PC-3 (cell line): ENCODE measurements at regions of chr2 and their contacts with region 1.

Region 1: GRCh38 chr2:54471221-54471711 is 15.1 kb downstream of the SPTBN1 start:
- DNase-seq: peak; percentile 43
- ATAC-seq: no peak
- H3K4me3 ChIP-seq: no peak overlapping the region
- H3K27ac ChIP-seq: no peak overlapping the region
- H3K4me1 ChIP-seq: no peaks in the 10 kb centered on the region
- H3K27me3 ChIP-seq: no peaks in the 10 kb centered on the region
- CTCF ChIP-seq: no peak

Region 2: DNA sequence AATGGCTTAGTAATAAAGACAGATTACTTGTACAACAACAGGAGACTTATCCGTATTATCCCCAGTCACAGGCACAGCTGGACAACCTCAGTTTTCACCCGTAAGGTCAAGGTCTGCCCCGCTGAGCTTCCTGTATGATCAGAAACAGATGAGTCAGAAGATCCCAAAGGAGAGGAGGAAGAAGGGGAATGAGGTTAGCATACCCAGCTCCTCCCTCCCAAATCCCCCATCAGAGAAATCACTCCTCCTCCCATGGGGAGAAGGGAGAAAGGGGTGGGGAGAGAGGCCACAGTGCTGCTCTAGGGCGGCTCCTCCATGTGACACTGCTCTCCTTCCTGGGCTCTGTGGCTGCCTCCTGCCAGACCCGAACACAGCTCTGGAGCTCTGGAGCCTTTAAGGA is 68.9 kb before region 1 on chr2:
- CTCF ChIA-PET with region 1: no interaction called
- POLR2A ChIA-PET with region 1: no interaction called
- intact Hi-C with region 1: no loop called
- DNase-seq: no peak
- ATAC-seq: no peak
- H3K4me3 ChIP-seq: no peak overlapping the region
- H3K27ac ChIP-seq: no peak overlapping the region
- H3K4me1 ChIP-seq: no peaks in the 10 kb centered on the region
- H3K27me3 ChIP-seq: 0 out of 2 replicates have a peak, but pooled peaks cover 4% of the 10 kb centered on the region
- CTCF ChIP-seq: no peak

Region 3: DNA sequence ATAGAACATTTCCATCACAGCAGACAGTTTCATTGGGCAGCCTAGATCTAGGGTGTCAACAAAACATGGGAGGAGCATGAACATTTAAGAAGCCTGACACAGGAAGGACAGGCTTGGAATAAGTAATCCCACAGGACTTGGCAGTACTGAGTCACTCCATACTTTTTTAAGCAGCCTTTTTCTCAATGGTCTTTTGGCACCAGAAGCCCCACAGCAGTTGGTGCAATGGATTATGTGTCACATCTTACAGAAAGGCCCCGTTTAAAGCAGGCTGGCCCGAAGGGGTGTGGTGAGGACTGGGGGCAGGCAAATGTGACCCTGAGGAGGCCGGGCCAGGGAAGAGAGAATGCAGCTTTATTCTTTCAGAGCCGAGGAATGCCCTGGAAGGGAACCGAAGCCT is 11.4 kb after region 1 on chr2:
- CTCF ChIA-PET with region 1: no interaction called
- POLR2A ChIA-PET with region 1: no interaction called
- intact Hi-C with region 1: no loop called
- DNase-seq: peak; percentile 28
- ATAC-seq: peak; percentile 18; the same call in 1 of the 2 replicates
- H3K4me3 ChIP-seq: no peak overlapping the region
- H3K27ac ChIP-seq: no peak overlapping the region
- H3K4me1 ChIP-seq: peaks cover 10% of the 10 kb centered on the region
- H3K27me3 ChIP-seq: no peaks in the 10 kb centered on the region
- CTCF ChIP-seq: no peak

Region 4: GRCh38 chr2:54531558-54531957 is 60.3 kb after region 1 on chr2:
- CTCF ChIA-PET with region 1: no interaction called
- POLR2A ChIA-PET with region 1: no interaction called
- intact Hi-C with region 1: no loop called
- DNase-seq: peak; percentile 82
- ATAC-seq: peak; percentile 75
- H3K4me3 ChIP-seq: peak overlapping the region; percentile 49; the same call in 1 of the 2 replicates
- H3K27ac ChIP-seq: peak overlapping the region; percentile 86
- H3K4me1 ChIP-seq: peaks cover 37% of the 10 kb centered on the region
- H3K27me3 ChIP-seq: no peaks in the 10 kb centered on the region
- CTCF ChIP-seq: no peak

Region 5: GRCh38 chr2:54864727-54865126 is 393.5 kb after region 1 on chr2:
- CTCF ChIA-PET with region 1: no interaction called
- POLR2A ChIA-PET with region 1: interaction called, 18 read pairs
- intact Hi-C with region 1: no loop called
- DNase-seq: no peak
- ATAC-seq: no peak
- H3K4me3 ChIP-seq: no peak overlapping the region
- H3K27ac ChIP-seq: no peak overlapping the region
- H3K4me1 ChIP-seq: no peaks in the 10 kb centered on the region
- H3K27me3 ChIP-seq: no peaks in the 10 kb centered on the region
- CTCF ChIP-seq: no peak